ENCODE measurements at regions of chr2 and their contacts with region 1.

Region 1: GRCh38 chr2:102366406-102367112 is 11.0 kb downstream of the IL18R1 start:
- DNase-seq: peak; percentile 36
- H3K4me3 Mint-ChIP-seq: peak overlapping the region; percentile 31
- H3K27ac Mint-ChIP-seq: peak overlapping the region; percentile 87
- H3K4me1 Mint-ChIP-seq: peaks cover 68% of the 10 kb centered on the region
- H3K27me3 Mint-ChIP-seq: no peaks in the 10 kb centered on the region

Region 2: DNA sequence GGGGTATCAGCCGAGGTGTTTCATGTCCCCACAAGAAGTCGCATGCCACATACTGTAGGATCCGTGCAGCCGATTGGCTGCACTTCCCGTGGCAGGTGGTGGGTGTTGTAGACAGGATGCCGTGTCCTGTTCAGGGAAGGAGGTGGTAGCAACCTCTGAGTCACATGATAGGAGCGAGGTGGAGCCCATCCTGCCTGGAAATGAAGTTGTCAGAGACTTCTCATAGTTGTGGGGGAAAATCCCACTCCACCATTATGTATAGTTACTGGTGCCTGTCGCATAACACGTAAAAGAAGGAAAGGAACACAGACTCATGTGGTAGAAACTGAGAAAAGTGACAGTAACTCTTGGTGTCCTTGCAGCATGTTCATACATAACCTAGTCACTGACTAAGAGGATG is 466.2 kb before region 1 on chr2:
- CTCF ChIA-PET with region 1: no interaction called
- POLR2A ChIA-PET with region 1: no interaction called
- intact Hi-C with region 1: loop called (anchors 1 kb)
- DNase-seq: peak; percentile 88
- H3K4me3 Mint-ChIP-seq: peak overlapping the region; percentile 56
- H3K27ac Mint-ChIP-seq: peak overlapping the region; percentile 93
- H3K4me1 Mint-ChIP-seq: peaks cover 40% of the 10 kb centered on the region
- H3K27me3 Mint-ChIP-seq: peaks cover 15% of the 10 kb centered on the region

Region 3: GRCh38 chr2:102114290-102114721 is 252.3 kb before region 1 on chr2:
- CTCF ChIA-PET with region 1: no interaction called
- POLR2A ChIA-PET with region 1: no interaction called
- intact Hi-C with region 1: loop called (anchors 5 kb)
- DNase-seq: peak; percentile 58
- H3K4me3 Mint-ChIP-seq: no peak overlapping the region
- H3K27ac Mint-ChIP-seq: peak overlapping the region; percentile 59
- H3K4me1 Mint-ChIP-seq: peaks cover 73% of the 10 kb centered on the region
- H3K27me3 Mint-ChIP-seq: peaks cover 12% of the 10 kb centered on the region

Region 4: DNA sequence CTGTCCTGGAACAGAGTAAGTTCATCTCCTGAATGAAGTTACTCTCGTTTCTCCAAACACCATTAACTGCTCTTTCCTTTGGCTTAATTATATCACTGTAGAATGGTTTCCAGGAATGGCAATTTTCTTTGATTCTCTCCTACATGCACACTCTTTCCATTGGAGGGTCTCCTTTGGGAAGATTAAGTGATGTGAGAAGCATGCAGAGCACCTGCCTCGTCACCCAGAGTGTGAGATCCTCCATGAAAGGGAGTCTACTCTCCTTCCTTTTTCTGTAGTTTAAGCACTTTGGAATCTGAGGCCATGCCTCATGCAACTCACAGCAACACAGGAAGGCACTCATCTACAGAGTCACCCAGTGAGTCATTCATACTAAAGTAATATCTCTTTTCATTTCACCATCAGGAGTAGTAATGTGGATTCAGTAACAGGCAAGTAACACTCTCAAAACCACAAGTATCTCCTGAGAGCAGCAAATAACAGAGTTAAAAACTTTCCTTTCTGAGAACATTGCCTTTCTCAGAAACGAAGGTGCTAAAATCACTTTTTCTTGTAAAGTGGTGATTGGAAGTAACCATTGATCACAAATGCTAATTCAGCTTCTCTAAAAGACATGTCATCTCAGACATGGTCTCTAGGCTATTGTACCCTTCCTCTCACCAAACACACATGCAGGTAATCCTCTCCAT is 108.0 kb before region 1 on chr2:
- CTCF ChIA-PET with region 1: no interaction called
- POLR2A ChIA-PET with region 1: no interaction called
- intact Hi-C with region 1: loop called (anchors 1 kb)
- DNase-seq: peak; percentile 64
- H3K4me3 Mint-ChIP-seq: no peak overlapping the region
- H3K27ac Mint-ChIP-seq: peak overlapping the region; percentile 96
- H3K4me1 Mint-ChIP-seq: peaks cover 45% of the 10 kb centered on the region
- H3K27me3 Mint-ChIP-seq: no peaks in the 10 kb centered on the region

Region 5: GRCh38 chr2:102355526-102356380 is 10.8 kb before region 1 on chr2 and contains the start of gene IL18R1:
- CTCF ChIA-PET with region 1: interaction called, 6 read pairs
- POLR2A ChIA-PET with region 1: interaction called, 6 read pairs
- intact Hi-C with region 1: loop called (anchors 1 kb)
- DNase-seq: peak; percentile 81
- H3K4me3 Mint-ChIP-seq: peak within 1 kb of the TSS; percentile 97
- H3K27ac Mint-ChIP-seq: peak within 1 kb of the TSS; percentile 89
- H3K4me1 Mint-ChIP-seq: peaks cover 45% of the 10 kb centered on the region
- H3K27me3 Mint-ChIP-seq: no peaks in the 10 kb centered on the region
- total RNA-seq, gene IL18R1: 25.5 to 26.6 TPM

Region 6: DNA sequence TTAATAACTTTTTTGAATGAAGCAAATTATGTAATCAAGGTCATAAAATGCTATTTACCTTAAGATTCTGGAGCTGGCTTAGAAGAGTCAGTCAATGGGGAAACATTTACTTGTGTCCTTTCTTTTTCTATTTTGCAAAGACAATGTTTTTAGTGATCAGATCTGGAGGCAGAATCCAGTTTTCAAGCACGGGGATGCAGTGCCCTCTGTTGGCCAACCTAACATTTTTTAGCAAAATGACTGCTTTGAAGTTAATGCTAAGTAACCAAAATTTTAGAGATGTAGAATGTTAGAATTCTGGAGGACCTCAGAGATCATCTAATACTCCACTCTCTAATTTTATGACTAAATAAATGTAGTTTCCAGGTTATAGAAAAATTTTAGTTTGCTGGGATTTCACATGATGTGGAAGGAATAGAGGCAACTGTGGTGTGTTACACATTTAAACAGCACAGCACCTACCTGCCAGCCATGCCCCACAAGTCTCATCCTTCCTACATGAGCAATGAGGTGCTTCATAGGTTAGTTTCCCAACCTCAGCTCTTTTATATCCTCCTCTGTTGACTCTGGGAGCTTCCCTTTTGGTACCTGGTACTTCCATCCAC is 82.9 kb after region 1 on chr2:
- CTCF ChIA-PET with region 1: interaction called, 10 read pairs
- POLR2A ChIA-PET with region 1: no interaction called
- intact Hi-C with region 1: no loop called
- DNase-seq: peak; percentile 82
- H3K4me3 Mint-ChIP-seq: no peak overlapping the region
- H3K27ac Mint-ChIP-seq: no peak overlapping the region
- H3K4me1 Mint-ChIP-seq: no peaks in the 10 kb centered on the region
- H3K27me3 Mint-ChIP-seq: peaks cover 1% of the 10 kb centered on the region